Aorta (tissue), 5 donors: ENCODE measurements at regions of chr15 and their contacts with region 1.

Region 1: DNA sequence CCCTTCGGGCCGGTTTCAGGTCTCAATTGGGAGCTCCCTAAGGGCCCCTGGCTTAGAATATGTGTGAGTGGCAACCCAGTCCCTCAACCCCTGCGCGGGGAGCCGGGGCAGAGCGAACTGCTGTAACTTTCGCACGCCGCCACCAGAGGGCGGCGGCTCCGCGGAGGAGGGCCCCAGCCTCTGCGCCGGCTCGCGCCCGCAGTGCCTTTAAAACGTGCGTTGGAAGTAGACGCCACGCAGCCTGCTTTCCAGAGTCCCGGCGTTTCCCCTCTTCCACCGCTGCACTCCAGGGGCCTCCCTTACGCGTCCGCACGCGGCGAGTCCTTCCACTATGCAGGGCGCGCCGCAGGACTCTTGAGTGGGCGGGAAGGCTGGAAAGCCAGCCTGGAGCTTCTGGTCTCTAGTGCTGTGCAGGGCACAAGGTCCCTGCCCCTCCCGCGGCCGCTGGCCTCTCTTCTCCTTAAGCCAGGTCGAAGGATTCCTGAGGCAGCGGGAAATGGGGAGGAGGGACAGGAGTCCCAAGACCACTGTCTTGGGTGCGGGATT is 23.7 kb upstream of the RNU6-1 start:
- DNase-seq: peak; percentile 86 to 95
- ATAC-seq: peak; percentile 97
- H3K4me3 ChIP-seq: peak overlapping the region in 1 of 2 donors; percentile 4
- H3K27ac ChIP-seq: no peak overlapping the region
- H3K4me1 ChIP-seq: no peaks in the 10 kb centered on the region
- H3K27me3 ChIP-seq: no peaks in the 10 kb centered on the region

Region 2: DNA sequence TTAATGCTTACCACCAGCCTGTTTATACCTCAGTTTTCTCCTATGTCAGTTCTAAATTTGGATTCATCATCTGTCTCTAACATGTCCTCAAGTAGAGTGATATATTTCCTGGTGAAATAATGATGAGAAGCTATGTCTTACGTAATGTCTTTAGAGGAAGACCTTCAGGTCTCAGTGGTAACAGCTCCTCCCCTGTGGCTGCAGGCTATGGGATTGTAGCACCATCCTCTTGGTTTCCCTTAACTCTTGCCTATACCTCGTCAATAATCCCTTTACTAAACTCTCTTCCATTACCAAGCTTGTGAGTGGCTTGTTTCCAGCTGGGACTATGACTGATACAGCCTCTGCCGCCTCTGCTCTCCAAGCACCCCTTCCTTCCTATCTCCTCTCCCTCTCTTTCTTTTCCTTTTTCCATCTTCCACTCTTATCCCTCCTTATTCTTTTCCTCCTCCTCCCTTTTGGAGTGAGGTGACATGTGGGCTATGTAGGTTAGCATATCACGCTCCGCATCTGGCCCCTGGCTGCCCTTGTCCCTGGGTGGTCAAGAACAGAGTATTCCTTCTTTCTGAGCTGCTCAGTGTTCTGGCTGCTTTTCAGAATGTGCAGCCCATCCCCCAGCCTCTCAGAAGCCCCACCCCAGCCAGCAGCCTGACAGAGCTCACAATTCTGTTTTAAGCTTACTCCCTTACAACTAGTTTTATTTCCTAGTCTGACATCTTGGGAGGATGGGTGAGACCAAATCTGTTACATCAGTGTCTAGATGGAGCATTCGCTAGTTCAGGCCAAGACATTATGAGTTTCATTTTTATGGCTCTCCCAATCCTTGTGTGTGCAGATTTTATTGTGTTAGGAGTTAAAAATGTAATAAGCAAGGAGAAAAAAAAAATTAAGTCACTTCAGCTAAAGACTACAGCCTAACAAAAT is 51.3 kb after region 1 on chr15:
- intact Hi-C with region 1: loop called in 1 of 2 experiments (anchors 5 kb)
- DNase-seq: peak; percentile 77 to 81
- ATAC-seq: peak; percentile 76
- H3K4me3 ChIP-seq: no peak overlapping the region
- H3K27ac ChIP-seq: peak overlapping the region; percentile 61 to 72
- H3K4me1 ChIP-seq: peaks cover 10 to 12% of the 10 kb centered on the region in 2 donors
- H3K27me3 ChIP-seq: no peaks in the 10 kb centered on the region

Region 3: GRCh38 chr15:68053701-68054627 is 190.4 kb after region 1 on chr15 and contains the start of gene PIAS1:
- intact Hi-C with region 1: loop called (anchors 5 to 10 kb)
- DNase-seq: peak; percentile 96 to 98
- ATAC-seq: peak; percentile 97
- H3K4me3 ChIP-seq: peak within 1 kb of the TSS; percentile 67 to 98
- H3K27ac ChIP-seq: no peak within 1 kb of the TSS
- H3K4me1 ChIP-seq: peaks cover 0 to 3% of the 10 kb centered on the region in 2 donors
- H3K27me3 ChIP-seq: no peaks in the 10 kb centered on the region
- total RNA-seq, gene PIAS1: 43.6 to 62.9 TPM

Region 4: GRCh38 chr15:68154923-68155559 is 291.5 kb after region 1 on chr15:
- intact Hi-C with region 1: loop called (anchors 2 kb)
- DNase-seq: no peak
- ATAC-seq: peak; percentile 66
- H3K4me3 ChIP-seq: no peak overlapping the region
- H3K27ac ChIP-seq: no peak overlapping the region
- H3K4me1 ChIP-seq: peaks cover 3 to 4% of the 10 kb centered on the region in 2 donors
- H3K27me3 ChIP-seq: no peaks in the 10 kb centered on the region

Region 5: GRCh38 chr15:68210821-68211655 is 347.5 kb after region 1 on chr15:
- intact Hi-C with region 1: loop called (anchors 2 to 5 kb)
- DNase-seq: peak; percentile 79 to 91
- ATAC-seq: peak; percentile 71
- H3K4me3 ChIP-seq: no peak overlapping the region
- H3K27ac ChIP-seq: no peak overlapping the region
- H3K4me1 ChIP-seq: no peaks in the 10 kb centered on the region
- H3K27me3 ChIP-seq: no peaks in the 10 kb centered on the region